Mammary epithelial cell (primary cell): ENCODE measurements at regions of chr7 and their contacts with region 1.

Region 1: GRCh38 chr7:50818324-50818723 is 35.6 kb upstream of the GRB10 start:
- DNase-seq: no peak
- H3K4me3 ChIP-seq: no peak overlapping the region
- H3K27ac ChIP-seq: no peak overlapping the region
- H3K4me1 ChIP-seq: no peaks in the 10 kb centered on the region
- H3K27me3 ChIP-seq: peaks cover 2% of the 10 kb centered on the region
- CTCF ChIP-seq: no peak

Region 2: GRCh38 chr7:50721165-50721564 is 97.2 kb before region 1 on chr7:
- CTCF ChIA-PET with region 1: no interaction called
- dilution Hi-C with region 1: loop called (anchors 5 kb)
- in situ Hi-C with region 1: no loop called
- intact Hi-C with region 1: no loop called
- DNase-seq: no peak
- H3K4me3 ChIP-seq: no peak overlapping the region
- H3K27ac ChIP-seq: no peak overlapping the region
- H3K4me1 ChIP-seq: no peaks in the 10 kb centered on the region
- H3K27me3 ChIP-seq: no peaks in the 10 kb centered on the region
- CTCF ChIP-seq: no peak

Region 3: GRCh38 chr7:51198654-51199053 is 380.3 kb after region 1 on chr7:
- CTCF ChIA-PET with region 1: no interaction called
- dilution Hi-C with region 1: no loop called
- in situ Hi-C with region 1: no loop called
- intact Hi-C with region 1: no loop called
- DNase-seq: no peak
- H3K4me3 ChIP-seq: no peak overlapping the region
- H3K27ac ChIP-seq: no peak overlapping the region
- H3K4me1 ChIP-seq: no peaks in the 10 kb centered on the region
- H3K27me3 ChIP-seq: no peaks in the 10 kb centered on the region
- CTCF ChIP-seq: no peak